ENCODE measurements at regions of chrX and their contacts with region 1.

Region 1: DNA sequence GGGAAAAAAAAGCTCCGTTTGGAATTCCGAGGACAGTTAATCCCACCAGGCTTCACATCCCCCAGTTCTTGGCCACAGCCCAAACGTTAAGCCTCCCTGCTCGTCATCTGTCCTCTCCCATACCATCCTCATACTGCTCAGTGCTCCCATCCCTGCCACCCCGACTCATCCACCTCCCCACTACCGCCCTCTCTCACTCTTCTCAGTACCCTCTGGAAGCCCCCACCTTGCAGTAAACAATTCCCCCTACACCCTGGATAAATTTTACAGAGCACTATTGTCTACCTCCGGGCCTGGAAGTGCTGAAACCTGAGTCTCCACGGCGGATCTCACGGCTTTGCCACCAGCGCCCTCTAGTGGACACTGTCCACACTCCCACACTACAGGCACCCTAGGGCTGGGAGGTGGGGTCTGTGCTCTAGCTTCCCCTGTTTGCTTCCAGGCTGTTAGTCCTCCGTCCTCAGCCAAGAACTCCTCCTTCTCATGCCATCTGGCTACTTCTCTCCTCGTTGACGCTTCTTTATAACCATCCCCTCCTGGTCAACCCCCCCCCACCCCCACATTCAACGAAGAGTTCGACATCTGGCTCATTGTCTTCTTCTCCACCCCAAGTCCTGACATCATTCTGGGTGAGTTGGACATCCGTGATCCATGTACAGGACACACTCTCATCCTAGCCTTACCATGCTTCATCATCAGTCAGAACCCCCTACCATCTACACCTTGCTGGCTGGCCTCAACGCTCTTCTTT is 54.5 kb downstream of the RTL9 start:
- DNase-seq: peak; percentile 80
- ATAC-seq: peak; percentile 92
- H3K4me3 Mint-ChIP-seq: no peak overlapping the region
- H3K27ac Mint-ChIP-seq: no peak overlapping the region
- H3K4me1 Mint-ChIP-seq: peaks cover 6% of the 10 kb centered on the region
- H3K27me3 Mint-ChIP-seq: no peaks in the 10 kb centered on the region

Region 2: DNA sequence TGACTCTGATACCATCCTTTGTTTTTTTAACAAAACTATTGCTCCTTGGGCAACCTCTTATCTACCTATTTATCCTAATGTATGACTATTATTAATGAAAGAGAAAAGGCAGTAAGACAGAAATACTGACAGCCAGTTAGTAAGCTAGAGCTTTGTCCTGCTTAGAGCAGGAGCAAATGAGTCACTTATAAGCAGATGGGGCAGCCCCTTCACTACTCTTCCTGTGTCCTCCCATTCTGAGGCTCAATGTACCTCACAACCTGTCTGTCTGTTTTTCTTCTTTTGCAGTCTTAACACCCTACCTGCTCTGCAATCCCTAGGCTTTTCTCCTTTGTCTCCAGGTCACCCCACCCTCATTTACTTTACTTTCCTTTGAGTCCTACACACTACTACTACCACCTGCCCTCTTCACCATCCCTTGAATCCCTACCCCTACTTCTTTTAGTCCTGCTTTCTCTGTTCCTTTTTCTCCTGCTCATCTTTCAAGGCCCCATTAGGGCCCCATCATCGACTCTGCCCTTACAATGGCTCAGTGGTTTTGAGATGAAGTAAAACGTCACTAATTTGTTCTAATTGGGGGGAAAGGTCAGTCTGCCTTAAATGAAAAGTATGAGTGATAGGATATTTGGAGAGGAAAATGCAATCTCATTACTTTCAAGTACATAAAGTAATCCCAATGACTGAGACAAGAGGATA is 1225.5 kb before region 1 on chrX:
- CTCF ChIA-PET with region 1: no interaction called
- POLR2A ChIA-PET with region 1: no interaction called
- intact Hi-C with region 1: no loop called
- DNase-seq: no peak
- ATAC-seq: no peak
- H3K4me3 Mint-ChIP-seq: no peak overlapping the region
- H3K27ac Mint-ChIP-seq: no peak overlapping the region
- H3K4me1 Mint-ChIP-seq: no peaks in the 10 kb centered on the region
- H3K27me3 Mint-ChIP-seq: peaks cover 2% of the 10 kb centered on the region

Region 3: DNA sequence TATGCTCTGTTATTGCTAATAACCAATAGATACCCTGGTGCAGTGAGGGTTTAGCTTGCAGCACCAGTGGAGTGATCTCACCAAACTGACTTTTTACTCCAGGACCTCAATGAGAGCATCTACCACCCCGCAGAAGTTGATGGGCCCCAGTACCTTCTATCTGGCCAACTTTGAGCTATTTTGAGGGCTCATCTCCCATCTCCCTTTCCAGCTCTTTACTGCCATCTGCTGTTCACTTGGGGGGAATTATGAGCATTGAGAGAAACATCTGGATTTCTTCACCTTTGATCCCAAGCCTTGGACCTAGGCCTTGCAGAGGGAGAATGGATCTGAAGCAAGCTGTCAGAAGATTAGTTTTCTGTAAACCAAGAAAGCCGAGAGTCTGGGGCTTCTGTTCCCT is 266.6 kb before region 1 on chrX:
- CTCF ChIA-PET with region 1: interaction called, 75 read pairs
- POLR2A ChIA-PET with region 1: no interaction called
- intact Hi-C with region 1: no loop called
- DNase-seq: peak; percentile 38
- ATAC-seq: peak; percentile 73
- H3K4me3 Mint-ChIP-seq: no peak overlapping the region
- H3K27ac Mint-ChIP-seq: no peak overlapping the region
- H3K4me1 Mint-ChIP-seq: peaks cover 7% of the 10 kb centered on the region
- H3K27me3 Mint-ChIP-seq: no peaks in the 10 kb centered on the region

Region 4: DNA sequence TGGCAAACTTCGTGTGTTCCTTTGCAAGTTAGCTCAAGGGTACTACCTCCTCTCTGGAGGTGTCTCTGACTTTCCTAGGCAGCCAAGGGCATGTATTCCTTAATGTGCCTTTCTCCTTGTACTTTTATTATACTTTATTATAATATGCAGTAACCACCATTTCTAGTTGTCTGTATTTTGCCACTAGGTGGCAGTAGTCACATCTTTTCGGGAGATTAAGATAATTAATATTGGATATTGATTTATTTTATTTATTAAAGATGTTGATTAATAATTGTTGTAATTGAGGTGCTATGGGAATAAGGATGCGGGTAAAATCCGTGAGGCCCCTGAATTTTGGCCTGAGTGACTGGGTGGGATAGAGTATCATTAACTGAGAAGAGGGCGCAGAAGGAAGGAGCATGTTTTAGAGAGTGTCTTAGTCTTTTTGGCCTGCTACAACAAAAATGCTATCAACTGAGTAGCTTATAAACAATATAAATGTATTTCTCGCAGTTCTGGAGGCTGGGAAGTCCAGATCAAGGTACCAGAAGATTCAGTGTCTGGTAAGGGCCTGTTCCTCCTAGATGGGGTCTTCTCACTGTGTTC is 256.9 kb before region 1 on chrX:
- CTCF ChIA-PET with region 1: interaction called, 178 read pairs
- POLR2A ChIA-PET with region 1: interaction called, 7 read pairs
- intact Hi-C with region 1: loop called (anchors 1 kb)
- DNase-seq: no peak
- ATAC-seq: no peak
- H3K4me3 Mint-ChIP-seq: no peak overlapping the region
- H3K27ac Mint-ChIP-seq: no peak overlapping the region
- H3K4me1 Mint-ChIP-seq: peaks cover 5% of the 10 kb centered on the region
- H3K27me3 Mint-ChIP-seq: no peaks in the 10 kb centered on the region